Sigmoid colon (tissue), 7 donors: ENCODE measurements at regions of chr9 and their contacts with region 1.

Region 1: DNA sequence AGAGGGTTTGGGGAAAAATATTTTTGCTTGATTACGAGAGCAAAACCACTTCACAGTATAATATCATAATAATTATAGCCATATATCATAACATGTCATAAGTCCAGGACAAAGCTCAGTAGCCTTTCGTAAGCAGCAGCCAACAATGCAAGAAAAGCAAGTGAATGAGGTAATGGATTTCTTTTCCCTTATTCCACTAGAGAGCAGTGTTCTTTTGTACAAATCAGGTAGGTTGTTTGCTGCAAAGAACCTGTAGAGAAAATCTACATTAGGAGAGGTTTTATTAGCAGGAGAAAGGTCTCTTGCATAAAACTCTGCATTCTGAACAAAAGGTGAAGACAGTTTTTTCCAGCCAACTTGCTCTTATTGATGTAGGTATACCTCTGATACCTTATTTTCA is 1033.4 kb downstream of the TLE4 start:
- DNase-seq: no peak
- H3K4me3 ChIP-seq: no peak overlapping the region
- H3K27ac ChIP-seq: no peak overlapping the region
- H3K4me1 ChIP-seq: peaks cover 0 to 17% (median 8%) of the 10 kb centered on the region in 4 donors
- H3K27me3 ChIP-seq: no peaks in the 10 kb centered on the region
- CTCF ChIP-seq: peak; percentile 18 to 49 (median 29)
- EP300 ChIP-seq: no peak
- POLR2A ChIP-seq: no peak

Region 2: GRCh38 chr9:80707120-80707519 is 102.0 kb after region 1 on chr9:
- intact Hi-C with region 1: no loop called
- DNase-seq: no peak
- H3K4me3 ChIP-seq: no peak overlapping the region
- H3K27ac ChIP-seq: no peak overlapping the region
- H3K4me1 ChIP-seq: peaks cover 0 to 6% (median 0%) of the 10 kb centered on the region in 4 donors
- H3K27me3 ChIP-seq: no peaks in the 10 kb centered on the region
- CTCF ChIP-seq: no peak
- EP300 ChIP-seq: no peak
- POLR2A ChIP-seq: no peak

Region 3: DNA sequence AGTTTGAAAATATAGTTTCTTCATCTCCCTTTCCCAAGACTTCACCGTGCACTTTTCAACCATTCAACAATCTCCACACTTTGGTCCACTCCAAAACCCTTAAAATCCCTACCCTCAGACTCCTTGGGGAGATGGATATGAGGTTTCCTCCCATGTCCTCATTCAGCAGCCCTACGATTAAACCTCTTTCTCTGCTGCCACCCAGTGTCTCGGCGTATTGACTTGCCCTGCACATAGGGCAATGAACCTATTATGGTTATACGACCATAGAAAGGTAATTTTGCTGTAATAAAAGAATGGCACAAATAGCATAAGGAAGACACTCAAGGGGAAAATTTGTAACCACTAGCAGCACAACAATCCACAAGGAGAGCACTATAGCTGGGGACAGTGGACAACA is 280.8 kb after region 1 on chr9:
- intact Hi-C with region 1: loop called (anchors 10 kb)
- DNase-seq: no peak
- H3K4me3 ChIP-seq: no peak overlapping the region
- H3K27ac ChIP-seq: no peak overlapping the region
- H3K4me1 ChIP-seq: no peaks in the 10 kb centered on the region
- H3K27me3 ChIP-seq: no peaks in the 10 kb centered on the region
- CTCF ChIP-seq: peak in 1 of 4 experiments; percentile 12
- EP300 ChIP-seq: no peak
- POLR2A ChIP-seq: no peak

Region 4: GRCh38 chr9:81492710-81493447 is 887.8 kb after region 1 on chr9:
- intact Hi-C with region 1: loop called (anchors 10 kb)
- DNase-seq: no peak
- H3K4me3 ChIP-seq: no peak overlapping the region
- H3K27ac ChIP-seq: no peak overlapping the region
- H3K4me1 ChIP-seq: peaks cover 0 to 11% (median 4%) of the 10 kb centered on the region in 4 donors
- H3K27me3 ChIP-seq: no peaks in the 10 kb centered on the region
- CTCF ChIP-seq: no peak
- EP300 ChIP-seq: no peak
- POLR2A ChIP-seq: no peak

Region 5: GRCh38 chr9:81848472-81848871 is 1243.3 kb after region 1 on chr9:
- intact Hi-C with region 1: loop called (anchors 10 kb)
- DNase-seq: no peak
- H3K4me3 ChIP-seq: no peak overlapping the region
- H3K27ac ChIP-seq: no peak overlapping the region
- H3K4me1 ChIP-seq: peaks cover 0 to 15% (median 6%) of the 10 kb centered on the region in 4 donors
- H3K27me3 ChIP-seq: no peaks in the 10 kb centered on the region
- CTCF ChIP-seq: peak in 3 of 4 experiments; percentile 22 to 32 (median 29)
- EP300 ChIP-seq: no peak
- POLR2A ChIP-seq: no peak

Region 6: DNA sequence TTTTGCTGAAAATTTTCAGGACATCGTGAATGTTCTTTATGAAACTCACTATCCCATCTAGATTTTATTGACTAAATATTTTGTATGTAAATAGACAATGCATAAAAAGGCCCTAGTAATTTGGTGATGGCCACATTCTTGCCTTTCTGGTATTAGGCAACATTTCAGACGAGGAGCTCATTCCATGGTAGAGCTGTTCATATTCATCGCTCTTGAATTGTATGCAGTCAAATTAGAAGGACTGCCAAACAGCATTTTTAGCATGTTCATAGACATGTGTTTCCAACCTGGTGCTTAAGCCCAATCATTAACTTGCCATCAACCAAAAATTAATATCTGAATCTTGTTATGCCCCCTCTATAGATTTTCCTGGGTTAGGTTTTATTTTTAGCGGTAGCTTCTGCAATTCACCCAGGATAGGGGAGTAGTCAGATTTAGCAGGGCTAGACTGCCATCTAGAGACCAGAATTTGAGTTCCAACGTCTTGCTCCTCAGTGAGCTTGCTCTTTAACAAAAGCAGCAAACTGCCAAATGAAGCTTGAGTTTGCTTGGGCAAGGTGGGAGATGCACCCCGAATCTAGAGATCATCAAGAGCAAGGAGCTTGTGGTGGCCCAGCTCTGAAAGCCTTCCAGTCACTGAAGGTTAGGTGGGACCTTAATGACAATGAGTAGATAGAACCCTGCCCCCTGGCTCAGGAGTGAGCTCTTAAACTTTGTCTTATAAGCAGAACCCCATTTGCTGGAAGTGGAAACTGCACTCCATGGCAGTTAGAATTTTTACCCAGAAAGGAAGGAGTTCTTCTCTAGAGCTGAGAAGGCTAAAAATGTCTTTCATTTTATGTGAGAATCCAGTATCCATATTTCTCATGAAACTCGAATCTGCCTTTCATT is 2001.6 kb after region 1 on chr9:
- intact Hi-C with region 1: loop called (anchors 10 kb)
- DNase-seq: peak; percentile 67
- H3K4me3 ChIP-seq: no peak overlapping the region
- H3K27ac ChIP-seq: peak overlapping the region in 2 of 4 donors; percentile 17 to 43
- H3K4me1 ChIP-seq: peaks cover 0 to 25% (median 19%) of the 10 kb centered on the region in 4 donors
- H3K27me3 ChIP-seq: no peaks in the 10 kb centered on the region
- CTCF ChIP-seq: peak; percentile 38 to 60 (median 52)
- EP300 ChIP-seq: no peak
- POLR2A ChIP-seq: no peak